Mammary epithelial cell (primary cell): ENCODE measurements at regions of chr19 and their contacts with region 1.

Region 1: GRCh38 chr19:17555480-17555928 is at the start of gene COLGALT1:
- DNase-seq: peak; percentile 92
- H3K4me3 ChIP-seq: peak within 1 kb of the TSS; percentile 60 to 99 (median 95)
- H3K27ac ChIP-seq: peak within 1 kb of the TSS; percentile 60
- H3K4me1 ChIP-seq: peaks cover 9% of the 10 kb centered on the region
- H3K27me3 ChIP-seq: no peaks in the 10 kb centered on the region
- CTCF ChIP-seq: no peak
- total RNA-seq, gene COLGALT1: 74.2 to 92.5 TPM

Region 2: GRCh38 chr19:17511724-17512573 is 43.6 kb before region 1 on chr19:
- CTCF ChIA-PET with region 1: interaction called, 4 read pairs
- dilution Hi-C with region 1: no loop called
- in situ Hi-C with region 1: no loop called
- intact Hi-C with region 1: loop called (anchors 1 kb)
- DNase-seq: peak; percentile 71
- H3K4me3 ChIP-seq: peak overlapping the region; percentile 52 to 84 (median 81)
- H3K27ac ChIP-seq: peak overlapping the region; percentile 80
- H3K4me1 ChIP-seq: peaks cover 32% of the 10 kb centered on the region
- H3K27me3 ChIP-seq: no peaks in the 10 kb centered on the region
- CTCF ChIP-seq: peak in 1 of 2 donors; percentile 32